GM10248 (cell line): ENCODE measurements at regions of chr5 and their contacts with region 1.

Region 1: DNA sequence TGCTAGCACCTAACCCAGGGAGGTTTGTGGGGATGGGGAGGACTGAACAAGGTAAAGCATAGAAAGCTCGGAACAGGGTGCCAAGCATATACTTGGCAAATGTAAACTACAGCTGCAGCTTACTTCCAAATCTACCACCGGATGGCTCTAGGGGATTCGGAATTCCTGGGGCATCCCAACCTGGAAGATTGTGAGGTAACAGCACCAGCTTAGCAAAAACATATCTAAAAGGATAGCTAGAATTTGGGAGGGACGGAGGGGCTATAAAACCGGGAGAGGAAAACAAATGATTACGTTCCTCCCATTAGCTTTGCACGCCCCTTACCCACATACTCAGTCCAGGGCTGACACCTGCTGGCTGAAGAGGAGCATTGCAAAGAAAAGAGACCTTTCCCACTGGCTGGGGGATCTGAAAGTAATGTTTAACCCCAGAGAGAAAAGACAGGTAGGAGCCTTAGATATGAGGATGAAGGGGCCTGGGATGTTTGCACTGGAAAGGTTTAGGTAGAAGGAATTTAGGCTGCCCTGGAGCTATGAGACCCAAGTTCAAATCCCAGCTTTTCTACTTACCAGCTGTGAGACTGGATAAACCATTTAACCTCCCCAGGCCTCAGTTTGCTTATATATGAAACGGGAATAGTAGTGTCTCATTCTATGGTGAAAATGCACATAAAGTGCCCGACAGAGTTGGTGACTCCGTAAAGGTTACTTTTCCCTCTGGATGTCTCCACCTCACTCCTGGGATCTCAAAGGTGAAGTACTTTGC is 73.6 kb downstream of the FAM114A2 start:
- DNase-seq: peak; percentile 80
- CTCF ChIP-seq: peak; percentile 95

Region 2: GRCh38 chr5:152527358-152528052 is 1437.6 kb before region 1 on chr5:
- CTCF ChIA-PET with region 1: interaction called, 111 read pairs
- POLR2A ChIA-PET with region 1: no interaction called
- DNase-seq: no peak
- CTCF ChIP-seq: no peak

Region 3: GRCh38 chr5:152560512-152561137 is 1404.4 kb before region 1 on chr5:
- CTCF ChIA-PET with region 1: interaction called, 42 read pairs
- POLR2A ChIA-PET with region 1: no interaction called
- DNase-seq: peak; percentile 28
- CTCF ChIP-seq: peak; percentile 72

Region 4: GRCh38 chr5:153501983-153502382 is 463.1 kb before region 1 on chr5:
- CTCF ChIA-PET with region 1: interaction called, 66 read pairs
- POLR2A ChIA-PET with region 1: no interaction called
- DNase-seq: no peak
- CTCF ChIP-seq: no peak

Region 5: DNA sequence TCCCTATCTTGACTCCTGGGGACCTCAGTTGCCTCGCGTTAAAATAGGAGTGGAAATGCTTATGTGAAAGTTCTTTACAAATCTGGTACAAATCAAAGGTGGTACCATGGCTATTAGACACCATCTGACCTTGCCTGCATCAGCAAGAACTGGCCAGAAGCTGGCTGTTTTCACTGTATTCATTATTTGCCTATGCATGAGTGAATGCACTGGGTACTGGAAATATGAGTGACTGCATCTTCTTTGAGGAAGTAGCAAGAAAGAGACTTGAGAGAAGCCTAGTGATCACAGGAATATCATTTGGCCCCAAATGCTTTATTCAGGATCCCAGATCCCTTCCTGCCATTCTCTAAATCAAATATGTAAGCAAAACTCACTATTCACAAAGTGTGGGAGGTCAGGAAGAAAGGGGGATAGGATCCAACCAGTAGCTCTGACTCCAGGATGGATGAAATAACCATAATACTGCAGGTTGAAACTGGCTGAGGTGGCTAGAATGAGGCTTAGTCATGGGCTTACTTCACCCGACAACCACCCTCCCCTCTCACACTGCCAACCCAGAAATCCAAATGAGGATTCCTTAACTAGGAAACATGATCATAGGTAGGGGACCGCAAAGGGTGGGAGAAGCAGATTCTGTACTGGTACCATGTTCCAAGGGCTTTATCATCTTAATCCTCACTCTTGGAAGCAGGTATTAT is 17.0 kb after region 1 on chr5:
- CTCF ChIA-PET with region 1: interaction called, 46 read pairs
- POLR2A ChIA-PET with region 1: no interaction called
- DNase-seq: no peak
- CTCF ChIP-seq: no peak

Region 6: GRCh38 chr5:154179846-154180710 is 215.0 kb after region 1 on chr5:
- CTCF ChIA-PET with region 1: interaction called, 11 read pairs
- POLR2A ChIA-PET with region 1: no interaction called
- DNase-seq: peak; percentile 73
- CTCF ChIP-seq: peak; percentile 72